ENCODE measurements at regions of chr13 and their contacts with region 1.

Region 1: DNA sequence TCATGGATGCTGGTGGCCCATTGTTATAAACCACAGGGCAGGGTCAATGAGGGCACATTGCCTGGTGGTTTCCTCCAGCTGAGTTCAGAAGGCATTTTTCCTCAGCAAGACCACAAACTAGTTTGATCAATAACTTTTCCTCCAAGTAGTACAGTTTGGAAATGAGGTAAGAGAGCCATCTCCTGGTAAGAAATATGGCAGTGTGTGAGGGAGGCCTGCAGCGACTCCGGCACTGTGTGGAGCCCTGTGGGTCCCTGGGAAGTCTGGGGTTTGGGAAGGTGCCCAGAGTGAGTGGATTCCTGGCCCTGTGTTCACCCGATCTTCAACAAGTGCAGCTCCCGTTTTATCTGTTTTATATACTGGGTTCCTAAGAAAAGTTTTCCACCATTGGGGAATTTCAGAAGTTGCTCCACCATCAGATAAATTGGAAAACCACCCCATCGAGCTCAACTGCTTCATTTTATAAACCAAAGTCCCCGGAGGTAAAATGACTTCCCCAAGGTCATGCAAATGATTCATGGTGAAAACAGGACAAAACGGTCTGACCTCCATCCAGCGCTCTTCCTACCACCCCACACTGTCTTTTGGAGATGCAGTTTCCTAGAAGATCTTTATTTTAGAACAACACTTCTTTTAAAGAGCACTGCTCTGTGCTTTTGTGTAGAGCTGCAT is 148.4 kb downstream of the KATNAL1 start:
- DNase-seq: no peak
- H3K4me3 Mint-ChIP-seq: no peak overlapping the region
- H3K27ac Mint-ChIP-seq: peak overlapping the region; percentile 75
- H3K4me1 Mint-ChIP-seq: peaks cover 37% of the 10 kb centered on the region
- H3K27me3 Mint-ChIP-seq: peaks cover 1% of the 10 kb centered on the region

Region 2: DNA sequence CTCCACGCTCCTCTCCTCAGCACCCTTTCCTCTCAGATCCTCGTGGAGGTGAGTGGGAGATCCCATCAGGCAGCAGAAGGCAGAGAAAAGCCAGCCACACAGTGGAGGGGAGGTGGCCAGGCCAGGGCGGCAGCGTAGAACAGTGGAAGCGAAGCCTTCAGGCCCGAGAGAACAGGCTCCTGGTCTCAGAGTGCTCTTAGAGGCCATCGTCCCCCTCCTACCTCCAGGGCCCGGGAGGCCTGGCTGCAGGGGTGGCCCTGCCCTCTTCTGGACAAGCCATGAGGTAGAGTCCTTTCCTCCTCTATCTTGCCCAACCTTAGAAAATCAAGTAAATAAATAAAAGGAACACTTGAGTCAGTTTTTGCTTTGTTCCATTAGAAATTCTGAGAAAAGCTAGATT is 53.5 kb before region 1 on chr13:
- intact Hi-C with region 1: no loop called
- DNase-seq: no peak
- H3K4me3 Mint-ChIP-seq: no peak overlapping the region
- H3K27ac Mint-ChIP-seq: no peak overlapping the region
- H3K4me1 Mint-ChIP-seq: no peaks in the 10 kb centered on the region
- H3K27me3 Mint-ChIP-seq: peaks cover 12% of the 10 kb centered on the region

Region 3: DNA sequence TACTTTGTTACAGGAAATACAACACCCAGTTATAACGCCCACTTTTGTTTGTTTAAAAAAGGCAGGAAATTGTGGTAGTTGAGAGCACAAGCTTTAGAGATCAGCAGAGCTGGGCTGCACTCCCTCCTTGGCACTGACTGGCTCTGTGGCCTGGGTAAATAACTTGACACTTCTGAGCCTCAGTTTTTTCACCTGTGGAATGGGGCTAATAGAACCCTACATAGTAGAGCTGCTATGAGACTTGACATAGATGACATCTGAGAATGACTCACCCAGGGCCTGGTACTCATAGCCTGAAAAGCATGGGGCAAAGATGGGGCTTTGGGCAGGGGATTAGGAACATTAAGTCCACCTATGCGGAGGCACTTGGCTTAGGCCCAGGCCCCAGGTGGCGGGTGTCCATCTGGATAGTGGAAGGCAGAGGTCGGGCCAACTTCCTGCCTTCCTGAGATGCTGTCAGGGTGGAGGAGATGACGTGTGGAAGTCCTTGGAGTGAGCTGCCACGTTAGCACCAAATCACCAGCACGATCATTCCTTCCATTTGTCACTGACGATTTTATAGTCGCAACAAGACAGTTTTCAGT is 10.6 kb before region 1 on chr13:
- intact Hi-C with region 1: loop called (anchors 1 kb)
- DNase-seq: peak; percentile 45
- H3K4me3 Mint-ChIP-seq: no peak overlapping the region
- H3K27ac Mint-ChIP-seq: peak overlapping the region; percentile 92
- H3K4me1 Mint-ChIP-seq: peaks cover 78% of the 10 kb centered on the region
- H3K27me3 Mint-ChIP-seq: no peaks in the 10 kb centered on the region

Region 4: GRCh38 chr13:30204564-30204963 is 45.7 kb after region 1 on chr13:
- intact Hi-C with region 1: no loop called
- DNase-seq: no peak
- H3K4me3 Mint-ChIP-seq: no peak overlapping the region
- H3K27ac Mint-ChIP-seq: no peak overlapping the region
- H3K4me1 Mint-ChIP-seq: peaks cover 4% of the 10 kb centered on the region
- H3K27me3 Mint-ChIP-seq: no peaks in the 10 kb centered on the region

Measured in activated T-helper 2 cell treated with anti-CD3 and anti-CD28 coated beads, Interferon-gamma antibody, Interleukin-2, Interleukin-4, amounts not matched to agents 10 μg/mL and 5 μg/mL and 100 μg/mL, durations not matched to agents 14 hours and 24 hours and 36 hours (primary cell).